Left colon (tissue), 2 donors: ENCODE measurements at regions of chr3 and their contacts with region 1.

Region 1: DNA sequence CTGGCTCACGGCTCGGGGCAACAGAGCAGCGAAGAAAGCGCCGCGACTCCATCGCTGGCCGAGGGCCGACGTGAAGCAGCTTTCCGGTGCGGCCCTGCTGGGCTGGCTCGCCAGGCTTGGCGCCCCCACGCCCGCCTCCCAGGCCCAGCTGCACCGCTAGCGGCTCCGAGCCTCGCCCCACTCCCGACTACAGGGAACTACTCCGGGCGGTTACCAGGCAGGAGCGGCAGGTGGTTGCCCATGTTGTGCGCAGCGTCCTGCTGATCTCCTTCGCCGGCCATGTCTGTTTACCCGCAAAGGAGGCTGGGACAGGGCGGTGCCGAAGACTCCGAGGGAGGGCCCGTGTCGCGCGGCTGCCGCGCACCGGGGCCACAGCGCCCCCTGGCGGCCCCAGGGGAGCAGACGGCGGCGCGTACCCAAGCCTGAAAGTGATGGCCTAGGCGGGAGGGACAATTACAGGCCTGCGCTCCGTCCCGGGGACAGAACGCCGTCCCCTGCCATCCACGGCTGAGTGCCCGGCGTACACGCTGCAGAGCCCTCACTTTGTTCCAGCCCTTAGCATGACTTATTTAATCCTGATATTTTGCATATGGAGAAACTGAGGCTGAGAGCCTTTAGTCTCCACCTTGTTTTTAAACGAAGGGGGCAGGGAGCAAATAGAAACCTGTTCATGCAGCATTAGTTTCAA is at the start of gene CRBN:
- DNase-seq: peak; percentile 86 to 91
- ATAC-seq: peak; percentile 98
- total RNA-seq, gene CRBN: 36.4 to 50.7 TPM

Region 2: DNA sequence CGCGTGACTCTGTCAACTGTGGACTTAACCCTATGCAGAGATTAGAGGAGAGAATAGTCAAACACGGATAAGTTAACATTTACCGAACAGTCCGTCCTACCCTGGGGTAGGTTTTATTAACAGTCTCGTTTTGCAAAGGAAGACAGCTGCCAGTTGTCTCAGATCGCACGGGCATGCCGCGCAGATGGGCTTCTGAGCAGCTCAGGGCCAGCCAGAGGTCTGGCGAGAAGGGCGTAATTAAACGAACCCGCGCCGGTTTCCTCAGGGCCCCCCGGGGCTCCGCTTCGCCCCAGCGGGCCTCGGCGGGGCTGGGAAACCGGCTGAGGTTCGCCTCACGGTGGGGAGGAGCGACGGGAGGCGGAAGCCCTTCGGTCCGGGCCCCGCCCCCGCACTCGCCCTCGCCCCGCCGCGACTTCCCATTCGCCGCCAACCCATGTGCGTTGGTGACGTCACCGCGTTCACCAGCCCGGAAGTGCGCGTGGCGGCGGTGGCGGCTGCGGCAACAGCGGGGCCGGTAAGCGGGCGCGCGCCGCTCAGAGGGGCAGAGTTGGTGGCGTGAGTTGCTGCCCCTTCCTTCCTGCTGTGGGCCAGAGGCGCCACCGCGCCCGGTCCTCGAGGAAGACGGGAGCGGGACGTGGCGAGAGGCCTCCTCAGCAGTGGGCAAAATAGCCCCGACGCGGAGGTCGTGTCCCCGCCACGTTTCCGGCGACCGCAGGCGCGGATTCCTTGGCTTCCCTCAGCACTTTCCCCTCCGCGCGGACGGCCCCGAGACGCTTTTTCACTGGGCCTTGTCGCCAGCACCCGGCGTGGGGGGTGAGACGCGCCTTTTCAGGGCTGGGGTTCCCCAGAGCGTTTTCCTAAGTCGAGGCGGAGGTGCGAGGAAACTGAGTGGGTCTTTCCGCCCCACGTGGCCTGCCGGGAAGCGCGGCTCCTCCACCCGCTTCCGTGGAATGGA is 52.8 kb before region 1 on chr3 and contains the start of gene TRNT1:
- intact Hi-C with region 1: loop called in 1 of 2 experiments (anchors 10 kb)
- DNase-seq: peak; percentile 96 to 99
- ATAC-seq: peak; percentile 99
- total RNA-seq, gene TRNT1: 17.2 to 22.0 TPM

Region 3: GRCh38 chr3:3334491-3334890 is 154.9 kb after region 1 on chr3:
- intact Hi-C with region 1: no loop called
- DNase-seq: no peak
- ATAC-seq: no peak